CD8-positive, alpha-beta memory T cell (primary cell): ENCODE measurements at regions of chr4 and their contacts with region 1.

Region 1: DNA sequence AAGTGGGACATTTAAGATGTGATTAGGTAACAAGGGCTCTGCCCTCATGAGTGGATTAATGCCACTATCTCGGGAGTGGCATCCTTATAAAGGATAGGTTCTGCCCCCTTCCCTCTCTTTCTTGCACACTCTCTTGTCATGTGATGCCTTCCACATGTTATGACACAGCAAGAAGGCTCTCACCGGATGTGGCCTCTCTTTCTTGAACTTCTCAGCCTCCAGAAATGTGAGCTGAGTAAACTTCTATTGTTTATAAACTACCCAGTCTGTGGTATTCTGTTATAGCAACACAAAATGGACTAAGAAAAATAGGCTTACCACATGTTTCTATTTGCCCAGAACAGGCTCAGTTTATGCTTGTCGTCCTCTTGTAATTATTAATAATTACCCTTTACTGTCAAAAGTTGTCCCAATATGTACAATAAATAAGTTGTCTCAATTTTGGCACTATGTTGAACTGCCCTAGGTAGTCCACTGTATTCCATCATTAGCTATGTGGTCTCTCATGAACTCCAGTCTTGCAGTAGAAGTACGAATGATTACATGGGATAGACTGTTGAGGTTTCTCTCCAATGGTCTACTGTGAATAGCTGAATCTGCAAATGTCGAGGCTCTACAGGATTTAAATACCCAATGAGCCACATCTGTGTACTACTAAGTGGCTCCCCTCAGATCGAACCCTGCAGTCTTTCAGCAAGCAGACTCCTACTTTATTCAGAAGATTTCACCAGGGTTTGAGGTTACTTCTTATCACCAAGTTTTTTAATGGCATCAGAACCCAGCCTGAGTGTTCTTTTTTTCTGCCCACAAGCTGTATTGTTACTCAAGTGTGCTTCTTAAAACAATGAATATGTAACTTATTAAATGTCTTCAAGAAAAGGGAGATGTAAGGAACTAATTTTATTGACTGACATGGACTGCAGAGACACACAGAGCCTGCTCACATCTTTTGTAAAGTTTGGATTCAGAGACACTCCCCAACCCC is 102.0 kb upstream of the LEF1 start:
- DNase-seq: no peak
- H3K4me3 ChIP-seq: no peak overlapping the region
- H3K4me3 Mint-ChIP-seq: no peak overlapping the region
- H3K27ac ChIP-seq: no peak overlapping the region
- H3K27ac Mint-ChIP-seq: no peak overlapping the region
- H3K4me1 ChIP-seq: no peaks in the 10 kb centered on the region
- H3K4me1 Mint-ChIP-seq: no peaks in the 10 kb centered on the region
- H3K27me3 ChIP-seq: no peaks in the 10 kb centered on the region
- H3K27me3 Mint-ChIP-seq: peaks cover 0 to 1% of the 10 kb centered on the region in 2 donors

Region 2: GRCh38 chr4:108287834-108288413 is 17.2 kb after region 1 on chr4:
- CTCF ChIA-PET with region 1: no interaction called
- POLR2A ChIA-PET with region 1: no interaction called
- DNase-seq: no peak
- H3K4me3 ChIP-seq: no peak overlapping the region
- H3K4me3 Mint-ChIP-seq: no peak overlapping the region
- H3K27ac ChIP-seq: no peak overlapping the region
- H3K27ac Mint-ChIP-seq: no peak overlapping the region
- H3K4me1 ChIP-seq: no peaks in the 10 kb centered on the region
- H3K4me1 Mint-ChIP-seq: no peaks in the 10 kb centered on the region
- H3K27me3 ChIP-seq: no peaks in the 10 kb centered on the region
- H3K27me3 Mint-ChIP-seq: peaks cover 0 to 3% of the 10 kb centered on the region in 2 donors

Region 3: DNA sequence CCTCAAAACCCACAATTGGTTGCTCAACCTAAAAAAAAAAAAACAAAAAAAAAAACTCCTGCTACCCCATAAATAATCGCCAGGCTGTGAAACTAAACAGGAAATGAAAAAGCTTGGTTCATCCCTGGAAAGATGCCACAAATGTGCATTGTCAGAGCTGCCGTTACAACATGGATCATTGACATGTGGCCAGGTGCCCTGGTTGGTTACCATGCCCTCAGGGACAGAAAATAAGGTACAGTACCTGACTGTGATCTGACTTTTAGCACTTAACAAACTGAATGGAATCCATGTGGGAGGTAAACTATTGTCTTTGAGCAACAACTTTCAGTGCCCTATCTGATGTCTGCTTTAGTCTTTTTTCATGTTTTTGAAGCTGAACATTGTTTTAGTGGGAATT is 231.6 kb after region 1 on chr4:
- CTCF ChIA-PET with region 1: no interaction called
- POLR2A ChIA-PET with region 1: interaction called, 13 read pairs
- DNase-seq: no peak
- H3K4me3 ChIP-seq: no peak overlapping the region
- H3K4me3 Mint-ChIP-seq: no peak overlapping the region
- H3K27ac ChIP-seq: no peak overlapping the region
- H3K27ac Mint-ChIP-seq: no peak overlapping the region
- H3K4me1 ChIP-seq: no peaks in the 10 kb centered on the region
- H3K4me1 Mint-ChIP-seq: no peaks in the 10 kb centered on the region
- H3K27me3 ChIP-seq: no peaks in the 10 kb centered on the region
- H3K27me3 Mint-ChIP-seq: no peaks in the 10 kb centered on the region